Endothelial cell of umbilical vein (primary cell): ENCODE measurements at regions of chr3 and their contacts with region 1.

Region 1: DNA sequence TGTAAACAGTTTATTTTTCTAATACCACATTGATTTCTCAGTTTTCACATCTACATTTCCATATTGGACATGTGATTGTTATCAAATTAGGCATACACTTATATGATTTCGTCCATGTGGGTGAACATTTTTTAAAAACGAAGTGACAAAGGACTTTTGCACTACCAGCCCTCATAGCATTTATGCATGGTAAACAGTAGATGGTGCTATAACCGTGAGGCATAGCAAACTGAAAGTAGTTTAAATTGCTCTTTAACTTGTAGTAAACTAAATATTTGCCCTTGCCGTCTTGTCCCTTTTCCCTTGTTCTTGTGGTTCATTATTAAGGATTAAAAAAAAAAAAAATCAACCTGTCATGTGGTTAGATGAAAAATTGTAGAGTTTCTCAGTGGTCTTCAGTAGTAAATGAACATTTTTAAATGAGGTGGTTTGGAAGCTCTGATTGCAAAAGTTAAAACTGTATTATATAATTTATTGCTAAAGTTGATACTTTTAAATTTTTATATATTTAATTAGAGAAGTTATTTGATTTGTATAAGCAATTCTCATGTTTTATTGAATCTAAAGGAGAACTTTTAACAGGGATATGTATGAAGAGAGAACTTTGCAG is 24.0 kb downstream of the STX19 start:
- DNase-seq: peak; percentile 73
- H3K4me3 ChIP-seq: peak overlapping the region in 1 of 3 experiments; percentile 48
- H3K27ac ChIP-seq: no peak overlapping the region
- H3K4me1 ChIP-seq: peaks cover 3% of the 10 kb centered on the region
- H3K27me3 ChIP-seq: no peaks in the 10 kb centered on the region
- CTCF ChIP-seq: peak; percentile 61 to 64
- POLR2A ChIP-seq: no peak

Region 2: DNA sequence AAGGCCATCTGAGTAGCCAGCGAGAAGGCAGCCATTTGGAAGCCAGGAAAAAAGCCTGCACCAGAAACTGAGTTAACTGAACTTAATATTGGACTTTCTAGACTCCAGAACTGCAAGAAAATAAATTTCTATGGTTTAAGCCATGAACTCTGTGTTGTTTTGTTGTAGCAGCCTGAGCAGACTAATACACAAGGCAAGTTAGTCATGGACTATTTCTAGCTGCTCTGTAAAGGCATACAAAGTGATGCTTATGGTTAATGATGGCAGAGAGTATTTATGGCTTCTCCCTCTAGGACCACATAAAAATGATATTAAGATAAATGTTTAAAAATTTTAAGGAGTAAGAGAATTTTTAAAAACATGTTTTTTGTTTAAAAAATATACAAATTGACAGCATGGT is 67.9 kb before region 1 on chr3:
- CTCF ChIA-PET with region 1: no interaction called
- POLR2A ChIA-PET with region 1: no interaction called
- dilution Hi-C with region 1: no loop called
- intact Hi-C with region 1: loop called (anchors 10 kb)
- DNase-seq: no peak
- H3K4me3 ChIP-seq: no peak overlapping the region
- H3K27ac ChIP-seq: no peak overlapping the region
- H3K4me1 ChIP-seq: no peaks in the 10 kb centered on the region
- H3K27me3 ChIP-seq: no peaks in the 10 kb centered on the region
- CTCF ChIP-seq: no peak
- POLR2A ChIP-seq: no peak

Region 3: DNA sequence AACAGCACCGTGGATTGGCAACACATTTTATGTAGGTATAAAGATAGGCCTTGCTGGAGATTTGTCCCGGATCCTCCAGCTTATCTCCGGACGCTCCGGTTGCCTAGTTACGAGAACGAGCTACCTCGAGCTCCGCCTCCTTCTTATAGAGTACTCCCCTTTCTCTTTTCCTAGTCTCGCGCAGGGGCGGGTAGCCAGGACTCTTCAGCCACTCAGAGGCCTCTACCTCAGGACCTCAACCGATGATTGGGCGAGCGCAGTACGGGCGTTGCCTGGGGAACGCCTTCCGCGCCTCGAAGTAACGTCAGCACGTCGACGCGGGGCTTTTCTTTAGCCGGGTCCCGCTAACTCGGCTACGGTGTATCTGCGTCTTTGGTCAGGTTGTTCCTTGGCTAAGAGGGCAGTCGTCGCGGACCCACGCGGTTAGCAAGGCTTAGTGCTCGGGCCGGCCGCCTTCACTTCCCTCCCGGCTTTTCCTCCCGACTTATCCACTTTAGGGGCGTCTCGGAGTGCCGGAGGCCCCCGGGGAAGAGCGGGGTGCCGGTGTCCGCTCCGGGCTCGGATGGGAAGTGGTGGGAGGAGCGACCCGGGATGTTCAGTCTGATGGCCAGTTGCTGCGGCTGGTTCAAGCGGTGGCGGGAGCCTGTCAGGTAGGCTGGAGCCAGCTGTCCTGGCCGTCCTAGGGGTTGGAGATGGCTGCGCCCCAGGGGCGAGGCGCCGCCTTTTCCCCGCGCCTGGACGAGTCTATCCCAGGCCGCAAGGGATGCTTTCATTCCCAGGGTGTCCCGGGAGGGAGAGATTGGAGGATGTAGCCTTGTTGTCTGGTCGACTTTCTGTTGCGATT is 24.4 kb before region 1 on chr3 and contains the start of gene ARL13B:
- CTCF ChIA-PET with region 1: interaction called, 5 read pairs
- POLR2A ChIA-PET with region 1: no interaction called
- dilution Hi-C with region 1: no loop called
- intact Hi-C with region 1: loop called (anchors 2 kb)
- DNase-seq: peak; percentile 99
- H3K4me3 ChIP-seq: peak within 1 kb of the TSS; percentile 67 to 94 (median 92)
- H3K27ac ChIP-seq: peak within 1 kb of the TSS; percentile 74
- H3K4me1 ChIP-seq: peaks cover 15% of the 10 kb centered on the region
- H3K27me3 ChIP-seq: peaks cover 5 to 11% of the 10 kb centered on the region in 2 experiments
- CTCF ChIP-seq: no peak
- POLR2A ChIP-seq: peak; percentile 60
- total RNA-seq, gene ARL13B: 8.6 and 12.7 TPM in 2 replicates

Region 4: GRCh38 chr3:94062431-94063404 is 58.3 kb after region 1 on chr3 and contains the starts of genes DHFR2 and NSUN3:
- CTCF ChIA-PET with region 1: interaction called, 14 read pairs
- POLR2A ChIA-PET with region 1: interaction called, 4 read pairs
- dilution Hi-C with region 1: no loop called
- intact Hi-C with region 1: loop called (anchors 2 kb)
- DNase-seq: peak; percentile 97
- H3K4me3 ChIP-seq: peak within 1 kb of the TSS; percentile 65 to 98 (median 88)
- H3K27ac ChIP-seq: peak within 1 kb of the TSS; percentile 92
- H3K4me1 ChIP-seq: peaks cover 17% of the 10 kb centered on the region
- H3K27me3 ChIP-seq: no peaks in the 10 kb centered on the region
- CTCF ChIP-seq: no peak
- POLR2A ChIP-seq: peak; percentile 74
- total RNA-seq, gene DHFR2: 2.1 and 2.2 TPM in 2 replicates
- total RNA-seq, gene NSUN3: 10.7 and 11.6 TPM in 2 replicates

Region 5: DNA sequence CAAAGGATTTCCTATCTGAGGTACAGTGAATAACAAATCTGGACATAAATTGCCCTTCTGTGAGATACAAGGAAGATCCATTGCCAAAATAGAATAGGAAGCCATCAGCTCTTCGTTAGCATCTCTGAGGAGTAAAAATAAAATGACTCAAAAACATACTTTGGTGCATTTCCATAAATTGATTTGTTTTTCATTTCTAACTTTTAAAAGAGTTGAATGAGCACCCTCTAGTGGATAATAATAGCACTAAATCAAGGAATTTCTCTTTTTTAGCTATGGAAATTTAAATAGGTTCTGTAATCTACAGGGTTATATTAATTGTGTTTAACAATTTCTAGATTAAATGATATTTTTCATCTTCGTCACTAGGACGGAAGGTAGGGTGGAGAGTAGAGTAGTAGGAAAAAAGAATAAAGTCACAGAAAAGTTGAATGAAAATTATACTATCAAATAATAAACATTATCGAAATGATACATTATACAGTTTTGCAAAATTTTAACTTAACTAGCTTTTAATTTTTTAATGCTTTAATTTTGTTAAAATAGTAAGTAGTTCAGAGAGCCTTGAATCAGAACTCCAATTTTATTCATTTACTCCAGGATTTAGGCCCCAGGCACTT is 64.9 kb after region 1 on chr3:
- CTCF ChIA-PET with region 1: interaction called, 34 read pairs
- POLR2A ChIA-PET with region 1: no interaction called
- dilution Hi-C with region 1: no loop called
- intact Hi-C with region 1: loop called (anchors 1 kb)
- DNase-seq: peak; percentile 32
- H3K4me3 ChIP-seq: no peak overlapping the region
- H3K27ac ChIP-seq: no peak overlapping the region
- H3K4me1 ChIP-seq: peaks cover 6% of the 10 kb centered on the region
- H3K27me3 ChIP-seq: no peaks in the 10 kb centered on the region
- CTCF ChIP-seq: peak; percentile 21 to 29
- POLR2A ChIP-seq: no peak

Region 6: DNA sequence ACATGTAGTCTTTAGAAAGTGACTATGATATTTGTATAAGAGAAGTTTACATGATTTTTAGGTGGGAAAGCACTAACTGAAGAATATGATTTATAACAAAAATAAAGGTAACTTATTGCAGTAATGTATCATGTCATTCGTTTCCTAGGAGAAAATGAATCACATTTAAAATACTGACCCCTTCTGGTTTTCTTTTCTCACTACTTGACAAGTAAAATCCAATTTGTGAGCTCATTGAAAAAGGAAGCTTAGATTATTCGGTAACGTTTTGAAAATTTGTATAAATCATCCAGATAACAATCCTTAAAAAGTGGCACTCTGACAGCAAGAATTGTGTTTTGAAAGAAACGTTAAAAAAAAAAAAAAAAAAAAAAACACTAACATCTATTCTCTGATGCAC is 97.4 kb after region 1 on chr3:
- CTCF ChIA-PET with region 1: interaction called, 8 read pairs
- POLR2A ChIA-PET with region 1: no interaction called
- dilution Hi-C with region 1: no loop called
- intact Hi-C with region 1: loop called (anchors 1 kb)
- DNase-seq: peak; percentile 8
- H3K4me3 ChIP-seq: no peak overlapping the region
- H3K27ac ChIP-seq: no peak overlapping the region
- H3K4me1 ChIP-seq: peaks cover 7% of the 10 kb centered on the region
- H3K27me3 ChIP-seq: no peaks in the 10 kb centered on the region
- CTCF ChIP-seq: no peak
- POLR2A ChIP-seq: no peak

Region 7: DNA sequence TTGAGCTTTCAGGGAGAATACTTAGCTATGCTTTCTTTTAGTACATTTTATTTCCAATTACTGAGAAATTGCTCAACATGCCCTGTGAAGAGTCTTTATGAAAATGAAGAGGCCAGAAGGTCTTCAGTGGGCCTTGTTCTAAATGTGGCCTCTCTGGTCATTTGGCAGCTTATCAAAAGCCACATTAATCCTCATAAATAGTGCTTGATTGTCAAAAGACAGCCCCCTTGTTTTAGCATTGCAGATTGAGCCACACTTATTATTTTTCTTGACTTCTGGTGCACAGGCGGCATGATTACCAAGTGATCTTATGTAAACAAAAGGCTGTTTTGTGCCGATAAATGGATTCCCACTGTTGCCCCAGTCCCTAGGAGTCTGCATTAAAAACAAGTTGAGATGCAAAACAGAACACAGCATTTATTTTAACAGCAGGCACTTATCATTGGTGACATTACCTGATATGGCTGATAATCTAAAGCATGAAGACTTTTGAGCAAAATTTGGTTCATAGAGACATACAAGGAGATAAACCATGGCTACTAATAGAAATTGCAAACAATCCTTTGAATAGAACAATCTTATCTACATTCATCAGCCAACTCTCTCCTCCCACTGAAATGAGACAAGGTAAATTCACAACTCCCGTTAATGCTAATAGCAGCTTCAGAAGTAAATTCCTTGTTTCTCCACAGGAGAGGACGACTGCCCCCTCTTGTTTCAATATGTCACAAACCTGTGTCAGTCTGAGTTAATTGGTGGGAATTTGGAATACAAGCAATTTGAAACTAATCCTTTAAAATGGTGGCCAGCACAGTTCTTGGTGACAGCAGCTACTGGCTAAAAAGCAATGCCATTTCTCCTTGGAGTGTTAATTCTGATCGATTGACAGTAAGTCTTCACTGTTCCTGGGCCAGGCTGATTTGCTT is 252.7 kb after region 1 on chr3:
- CTCF ChIA-PET with region 1: no interaction called
- POLR2A ChIA-PET with region 1: no interaction called
- dilution Hi-C with region 1: no loop called
- intact Hi-C with region 1: loop called (anchors 10 kb)
- DNase-seq: no peak
- H3K4me3 ChIP-seq: no peak overlapping the region
- H3K27ac ChIP-seq: no peak overlapping the region
- H3K4me1 ChIP-seq: no peaks in the 10 kb centered on the region
- H3K27me3 ChIP-seq: no peaks in the 10 kb centered on the region
- CTCF ChIP-seq: no peak
- POLR2A ChIP-seq: no peak